Activated CD4-positive, alpha-beta memory T cell treated with anti-CD3 and anti-CD28 coated beads for 36 hours (primary cell): ENCODE measurements at regions of chr11 and their contacts with region 1.

Region 1: DNA sequence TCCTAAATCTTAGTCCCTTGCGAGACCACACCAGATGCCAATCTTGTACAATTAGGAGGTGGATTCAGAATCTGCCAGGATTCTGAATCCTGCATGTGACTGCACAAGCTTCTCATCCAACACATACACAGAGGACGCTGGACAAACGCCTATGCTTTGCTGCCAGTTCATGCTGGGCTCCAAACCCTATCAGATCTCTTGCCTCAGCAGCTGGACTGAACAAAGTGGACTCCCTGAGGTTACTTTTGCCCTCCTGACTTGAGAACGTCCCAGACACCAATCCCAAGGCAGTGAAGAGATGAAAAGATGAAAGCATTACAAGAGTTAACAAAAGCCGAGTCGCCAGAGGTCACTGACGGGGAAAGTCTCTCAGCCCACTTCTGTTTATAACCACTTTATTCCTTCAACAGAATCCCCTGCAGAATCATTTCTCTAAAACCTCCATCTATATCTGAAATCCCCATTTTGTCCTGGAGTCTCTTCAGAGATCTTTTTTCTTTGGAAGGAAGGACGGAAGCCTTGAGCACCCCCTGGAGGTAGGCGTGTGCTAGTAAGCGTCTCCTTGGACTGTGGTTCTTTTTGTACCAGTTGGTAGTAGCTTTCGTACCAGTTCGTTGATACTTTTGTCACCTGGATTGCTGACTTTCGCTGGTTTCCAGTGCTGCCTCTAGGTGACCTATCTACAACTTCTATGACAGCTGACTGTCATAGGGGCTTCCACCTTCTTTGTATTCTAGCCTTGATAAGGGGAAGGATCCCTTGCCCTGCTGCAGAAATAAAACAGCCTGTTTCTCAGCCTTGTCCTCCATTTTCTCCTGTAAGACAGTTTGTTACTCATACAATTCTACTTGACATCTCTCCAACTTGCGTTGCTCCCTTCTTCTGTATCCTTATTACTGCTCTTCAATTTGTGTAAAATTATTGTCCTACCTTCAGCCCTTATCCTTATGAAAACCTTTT is 26.1 kb upstream of the EED start:
- DNase-seq: peak; percentile 79
- H3K4me3 Mint-ChIP-seq: peak overlapping the region; percentile 56
- H3K27ac Mint-ChIP-seq: peak overlapping the region; percentile 92
- H3K4me1 Mint-ChIP-seq: peaks cover 76% of the 10 kb centered on the region
- H3K27me3 Mint-ChIP-seq: no peaks in the 10 kb centered on the region

Region 2: DNA sequence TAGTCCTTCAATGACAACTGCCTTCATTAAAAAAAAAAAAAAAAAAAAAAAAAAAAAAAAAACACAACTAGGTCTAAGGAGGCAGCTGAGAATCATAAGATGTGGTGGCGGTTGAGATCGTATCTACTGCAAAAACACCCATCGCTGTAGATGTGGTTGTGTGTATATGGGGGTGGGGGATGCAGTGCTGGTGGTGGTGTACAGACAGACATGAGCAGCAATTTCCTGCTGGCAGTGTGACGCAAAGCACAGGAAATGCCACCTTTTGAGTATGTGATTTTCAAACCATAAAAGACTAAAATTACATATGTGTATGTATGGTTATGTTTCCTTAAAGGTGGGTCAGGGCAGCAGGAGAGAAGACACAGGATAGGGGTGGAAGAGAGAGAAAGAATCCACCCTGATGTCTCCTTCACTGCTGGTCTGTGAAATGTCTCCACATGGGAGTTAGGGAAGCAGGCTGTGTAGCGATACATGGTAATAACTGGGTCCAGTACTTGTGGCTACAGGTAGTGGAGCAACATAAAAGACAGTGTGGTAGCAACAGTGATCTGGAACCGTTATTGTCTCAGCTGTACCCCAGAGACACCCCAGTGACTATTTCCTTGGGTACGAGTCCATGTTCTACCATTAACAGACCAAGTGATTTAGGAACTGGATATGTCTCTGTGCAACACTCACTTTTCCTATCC is 465.4 kb before region 1 on chr11:
- CTCF ChIA-PET with region 1: no interaction called
- POLR2A ChIA-PET with region 1: no interaction called
- intact Hi-C with region 1: loop called (anchors 5 kb)
- DNase-seq: peak; percentile 94
- H3K4me3 Mint-ChIP-seq: peak overlapping the region; percentile 70
- H3K27ac Mint-ChIP-seq: peak overlapping the region; percentile 96
- H3K4me1 Mint-ChIP-seq: peaks cover 95% of the 10 kb centered on the region
- H3K27me3 Mint-ChIP-seq: peaks cover 3% of the 10 kb centered on the region

Region 3: DNA sequence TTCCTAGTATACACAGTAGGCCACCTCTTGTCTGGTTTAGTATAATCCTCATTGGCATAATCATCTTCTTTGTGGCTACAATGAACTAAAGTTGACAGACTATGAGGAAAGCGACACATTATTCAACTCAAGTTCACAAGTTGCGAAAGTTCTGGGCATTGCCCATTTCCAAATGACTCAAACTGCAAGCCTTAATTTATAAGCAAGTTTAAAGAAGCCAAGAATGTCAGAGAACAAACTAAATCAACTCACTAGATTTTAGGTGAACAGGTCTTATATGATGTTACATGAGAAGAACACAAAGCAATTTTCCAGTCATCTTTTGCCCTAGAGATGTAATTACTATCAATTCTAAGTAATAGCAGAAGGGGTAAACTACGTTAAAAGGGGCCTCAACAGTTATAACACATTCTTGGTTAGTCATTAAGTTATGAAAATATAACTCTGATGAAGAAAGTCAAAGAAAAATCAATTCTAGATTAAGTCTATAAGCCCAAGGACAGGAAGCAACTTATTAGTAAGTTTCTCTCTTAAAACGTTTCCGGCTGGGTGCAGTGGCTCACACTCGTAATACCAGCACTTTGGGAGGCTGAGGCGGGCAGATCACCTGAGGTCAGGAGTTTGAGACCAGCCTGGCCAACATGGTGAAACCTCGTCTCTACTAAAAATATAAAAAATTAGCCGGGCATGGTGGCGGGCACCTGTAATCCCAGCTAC is 171.0 kb before region 1 on chr11:
- CTCF ChIA-PET with region 1: interaction called, 13 read pairs
- POLR2A ChIA-PET with region 1: interaction called, 3 read pairs
- intact Hi-C with region 1: loop called (anchors 1 kb)
- DNase-seq: peak; percentile 81
- H3K4me3 Mint-ChIP-seq: peak overlapping the region; percentile 60
- H3K27ac Mint-ChIP-seq: peak overlapping the region; percentile 99
- H3K4me1 Mint-ChIP-seq: peaks cover 93% of the 10 kb centered on the region
- H3K27me3 Mint-ChIP-seq: no peaks in the 10 kb centered on the region

Region 4: GRCh38 chr11:86193297-86194095 is 24.9 kb before region 1 on chr11:
- CTCF ChIA-PET with region 1: interaction called, 13 read pairs
- POLR2A ChIA-PET with region 1: interaction called, 5 read pairs
- intact Hi-C with region 1: no loop called
- DNase-seq: peak; percentile 72
- H3K4me3 Mint-ChIP-seq: peak overlapping the region; percentile 60
- H3K27ac Mint-ChIP-seq: peak overlapping the region; percentile 64
- H3K4me1 Mint-ChIP-seq: peaks cover 33% of the 10 kb centered on the region
- H3K27me3 Mint-ChIP-seq: peaks cover 6% of the 10 kb centered on the region

Region 5: DNA sequence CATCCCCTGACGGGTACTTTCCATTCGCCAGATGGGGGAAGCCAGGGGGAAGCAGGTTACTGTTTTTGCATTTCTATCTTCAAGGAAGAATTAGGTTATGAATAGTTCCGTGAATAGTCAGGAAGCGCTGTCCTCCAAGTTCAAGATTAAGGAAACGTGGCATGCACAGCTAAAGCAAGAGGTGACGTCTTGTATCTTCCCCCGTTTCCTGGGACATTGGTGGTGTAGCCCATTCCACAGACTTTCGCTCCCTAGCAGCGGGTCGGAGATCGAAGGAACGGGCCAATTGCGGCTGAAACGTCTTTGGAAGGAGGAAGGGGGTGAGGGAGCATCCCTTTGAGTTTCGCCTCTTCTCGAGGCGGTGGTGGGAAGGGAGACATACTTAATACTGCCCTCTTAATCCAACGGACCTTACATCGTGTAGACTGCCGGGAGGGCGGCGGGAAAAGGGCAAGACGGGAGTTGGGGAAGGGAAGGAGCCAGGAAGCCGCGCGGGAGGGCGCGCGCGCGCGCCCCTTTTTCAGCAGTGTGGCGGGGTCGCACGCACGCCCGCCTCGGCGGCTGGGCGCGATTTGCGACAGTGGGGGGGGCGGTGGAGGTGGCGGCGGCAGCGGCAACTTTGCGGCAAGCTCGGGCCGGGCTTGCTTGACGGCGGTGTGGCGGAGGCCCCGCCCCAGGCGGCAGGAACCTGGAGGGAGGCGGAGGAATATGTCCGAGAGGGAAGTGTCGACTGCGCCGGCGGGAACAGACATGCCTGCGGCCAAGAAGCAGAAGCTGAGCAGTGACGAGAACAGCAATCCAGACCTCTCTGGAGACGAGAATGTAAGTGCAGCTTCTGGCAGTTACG is 26.3 kb after region 1 on chr11 and contains the start of gene EED:
- CTCF ChIA-PET with region 1: interaction called, 9 read pairs
- POLR2A ChIA-PET with region 1: interaction called, 8 read pairs
- intact Hi-C with region 1: loop called (anchors 1 kb)
- DNase-seq: peak; percentile 96
- H3K4me3 Mint-ChIP-seq: no peak within 1 kb of the TSS
- H3K27ac Mint-ChIP-seq: no peak within 1 kb of the TSS
- H3K4me1 Mint-ChIP-seq: peaks cover 33% of the 10 kb centered on the region
- H3K27me3 Mint-ChIP-seq: no peaks in the 10 kb centered on the region
- total RNA-seq, gene EED: 170 TPM

Region 6: DNA sequence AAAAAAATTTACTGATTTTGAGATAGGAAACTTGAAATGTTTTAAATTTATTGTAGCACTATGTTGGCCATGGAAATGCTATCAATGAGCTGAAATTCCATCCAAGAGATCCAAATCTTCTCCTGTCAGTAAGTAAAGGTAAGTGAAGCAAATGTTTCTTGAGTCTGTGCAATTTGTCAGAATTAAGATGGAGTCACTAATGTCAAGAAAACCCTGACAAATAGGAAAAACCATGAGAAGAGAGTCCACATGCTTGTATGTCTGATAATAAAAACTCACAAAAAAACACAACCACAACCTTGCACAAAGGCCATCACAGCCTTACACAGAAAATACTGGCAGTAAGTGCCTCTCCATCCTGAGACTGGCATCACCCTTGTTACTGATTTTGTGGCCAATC is 39.1 kb after region 1 on chr11:
- CTCF ChIA-PET with region 1: no interaction called
- POLR2A ChIA-PET with region 1: no interaction called
- intact Hi-C with region 1: no loop called
- DNase-seq: no peak
- H3K4me3 Mint-ChIP-seq: no peak overlapping the region
- H3K27ac Mint-ChIP-seq: peak overlapping the region; percentile 66
- H3K4me1 Mint-ChIP-seq: peaks cover 43% of the 10 kb centered on the region
- H3K27me3 Mint-ChIP-seq: no peaks in the 10 kb centered on the region

Region 7: GRCh38 chr11:86802601-86803051 is 584.2 kb after region 1 on chr11:
- CTCF ChIA-PET with region 1: no interaction called
- POLR2A ChIA-PET with region 1: no interaction called
- intact Hi-C with region 1: loop called (anchors 10 kb)
- DNase-seq: peak; percentile 27
- H3K4me3 Mint-ChIP-seq: no peak overlapping the region
- H3K27ac Mint-ChIP-seq: no peak overlapping the region
- H3K4me1 Mint-ChIP-seq: peaks cover 57% of the 10 kb centered on the region
- H3K27me3 Mint-ChIP-seq: peaks cover 51% of the 10 kb centered on the region